Astrocyte of the cerebellum (primary cell): ENCODE measurements at regions of chr18 and their contacts with region 1.

Region 1: DNA sequence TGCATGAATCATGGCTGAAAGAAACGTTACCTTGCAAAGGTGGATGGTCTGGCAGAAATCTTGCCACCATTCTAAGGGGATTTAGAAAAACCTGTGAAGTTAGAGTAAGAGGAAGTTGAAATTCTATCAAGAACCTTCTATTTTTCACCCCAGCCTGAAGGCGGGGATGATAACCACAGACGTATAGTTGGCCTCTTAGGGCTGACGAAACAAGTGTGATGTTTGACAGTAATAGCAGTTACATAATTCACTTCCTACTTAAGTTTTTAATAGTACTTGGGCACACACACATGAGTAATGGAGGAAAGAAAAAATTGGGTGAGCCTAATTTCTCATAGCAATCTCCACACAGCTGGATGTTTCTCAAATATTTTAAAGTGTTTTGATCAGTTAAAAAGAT is 336.6 kb upstream of the SALL3 start:
- DNase-seq: no peak
- H3K4me3 ChIP-seq: no peak overlapping the region
- CTCF ChIP-seq: no peak

Region 2: DNA sequence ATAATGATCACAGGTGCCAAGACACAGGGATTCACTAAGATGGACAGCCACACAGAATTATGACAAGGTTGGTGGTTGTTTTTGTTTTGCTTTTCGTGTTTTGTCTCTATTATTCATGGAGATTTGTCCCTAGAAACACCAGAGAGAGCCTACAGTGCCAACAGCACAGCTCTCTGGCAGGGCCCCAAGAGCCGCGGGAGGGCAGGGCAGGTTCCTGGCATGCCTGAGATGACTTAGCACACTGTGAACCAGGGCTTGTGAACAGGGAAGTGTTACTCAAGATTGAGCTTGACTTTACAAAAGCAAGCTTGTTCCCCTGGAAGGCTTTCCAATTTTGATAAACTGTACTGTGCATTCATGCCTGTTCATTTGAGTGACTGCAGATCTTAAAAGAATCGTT is 100.8 kb before region 1 on chr18:
- in situ Hi-C with region 1: loop called (anchors 5 kb)
- DNase-seq: no peak
- H3K4me3 ChIP-seq: no peak overlapping the region
- CTCF ChIP-seq: no peak

Region 3: GRCh38 chr18:78733762-78734613 is 91.0 kb after region 1 on chr18:
- in situ Hi-C with region 1: loop called (anchors 5 kb)
- DNase-seq: no peak
- H3K4me3 ChIP-seq: no peak overlapping the region
- CTCF ChIP-seq: no peak